Activated CD4-positive, alpha-beta T cell treated with anti-CD3 and anti-CD28 coated beads for 36 hours (primary cell): ENCODE measurements at regions of chr16 and their contacts with region 1.

Region 1: DNA sequence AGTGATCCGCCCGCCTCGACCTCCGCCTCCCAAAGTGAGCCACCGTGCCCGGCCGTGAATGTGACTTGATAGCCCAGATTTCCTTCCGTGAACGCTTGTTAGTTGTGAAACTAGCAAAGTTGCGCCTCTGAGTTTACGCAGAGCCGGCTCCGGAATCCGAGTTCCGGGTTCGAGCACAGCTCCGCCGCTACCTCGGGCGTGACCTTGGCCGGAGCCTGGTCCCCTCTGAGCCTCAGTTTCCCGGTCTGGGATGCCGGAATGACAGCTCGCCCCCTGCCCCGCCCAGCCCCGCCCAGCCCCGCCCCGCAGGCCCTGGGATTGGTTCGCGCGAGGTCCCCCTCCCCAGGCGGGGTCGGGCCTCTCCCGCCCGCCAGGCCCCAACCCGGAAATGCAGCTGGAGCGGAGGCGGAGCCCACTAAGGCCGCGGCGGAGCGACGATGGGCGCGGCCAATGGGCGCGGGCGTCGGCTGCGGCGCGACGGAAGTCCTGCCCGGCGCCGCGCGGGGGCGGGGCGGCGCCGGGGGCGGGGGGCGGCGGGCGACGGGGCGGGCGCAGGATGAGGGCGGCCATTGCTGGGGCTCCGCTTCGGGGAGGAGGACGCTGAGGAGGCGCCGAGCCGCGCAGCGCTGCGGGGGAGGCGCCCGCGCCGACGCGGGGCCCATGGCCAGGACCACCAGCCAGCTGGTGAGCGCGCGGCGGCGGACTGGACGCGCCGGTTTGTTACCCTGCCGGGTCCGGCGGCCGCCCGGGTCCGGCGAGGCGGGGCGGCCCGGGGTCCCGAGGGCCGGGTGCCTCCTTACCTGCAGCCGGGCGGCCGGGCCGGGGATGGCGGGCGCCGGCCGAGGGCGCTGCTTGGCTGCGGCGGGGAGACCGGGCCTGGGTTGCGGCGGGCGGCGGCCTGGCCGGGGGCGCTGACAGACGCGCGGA is at the start of gene PDPK1:
- DNase-seq: peak; percentile 97
- ATAC-seq: peak; percentile 93
- H3K4me3 Mint-ChIP-seq: peak within 1 kb of the TSS; percentile 83
- H3K27ac Mint-ChIP-seq: peak within 1 kb of the TSS; percentile 90
- H3K4me1 Mint-ChIP-seq: peaks cover 38% of the 10 kb centered on the region
- H3K27me3 Mint-ChIP-seq: no peaks in the 10 kb centered on the region
- total RNA-seq, gene PDPK1: 30.4 to 34.5 TPM

Region 2: GRCh38 chr16:1782352-1783091 is 755.2 kb before region 1 on chr16 and contains the starts of genes NUBP2 and SPSB3:
- CTCF ChIA-PET with region 1: no interaction called
- POLR2A ChIA-PET with region 1: no interaction called
- intact Hi-C with region 1: loop called in 1 of 2 experiments (anchors 2 kb)
- DNase-seq: peak; percentile 99
- ATAC-seq: peak; percentile 93
- H3K4me3 Mint-ChIP-seq: peak within 1 kb of the TSS; percentile 94
- H3K27ac Mint-ChIP-seq: peak within 1 kb of the TSS; percentile 85
- H3K4me1 Mint-ChIP-seq: peaks cover 26% of the 10 kb centered on the region
- H3K27me3 Mint-ChIP-seq: no peaks in the 10 kb centered on the region
- total RNA-seq, gene NUBP2: 34.4 to 42.4 TPM
- total RNA-seq, gene SPSB3: 12.5 to 13.6 TPM

Region 3: DNA sequence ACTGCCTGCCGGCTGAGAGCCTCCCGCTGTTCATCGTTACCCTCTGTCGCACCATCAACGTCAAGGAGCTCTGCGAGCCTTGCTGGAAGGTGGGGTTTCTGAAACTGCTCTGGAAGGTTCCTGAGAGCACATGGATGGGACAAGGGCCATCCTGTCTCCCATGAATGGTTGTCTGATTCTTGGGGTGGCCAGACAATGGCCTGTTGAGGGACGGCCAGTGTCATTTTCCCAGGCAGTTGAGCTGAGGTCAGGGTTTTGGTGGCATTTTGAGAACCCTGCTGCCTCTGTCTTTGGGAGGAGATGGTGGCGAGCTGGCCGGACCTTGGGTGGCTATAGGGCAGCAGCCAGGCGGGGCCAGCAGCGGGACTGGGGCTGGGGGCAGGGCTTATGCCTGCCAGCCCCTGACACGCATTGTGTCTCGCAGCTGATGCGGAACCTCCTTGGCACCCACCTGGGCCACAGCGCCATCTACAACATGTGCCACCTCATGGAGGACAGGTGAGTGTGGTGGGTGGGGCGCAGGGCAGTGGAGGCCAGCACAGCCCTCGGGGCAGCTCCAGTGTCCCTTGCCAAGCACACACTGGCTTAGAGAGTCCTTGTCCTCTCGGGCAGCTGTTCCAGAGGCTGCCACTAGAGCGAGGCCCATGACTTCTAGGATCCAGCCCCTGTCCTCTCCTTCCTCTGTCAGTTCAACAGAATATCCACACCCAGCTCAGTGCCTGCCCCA is 480.9 kb before region 1 on chr16:
- CTCF ChIA-PET with region 1: no interaction called
- POLR2A ChIA-PET with region 1: no interaction called
- intact Hi-C with region 1: no loop called
- DNase-seq: no peak
- ATAC-seq: no peak
- H3K4me3 Mint-ChIP-seq: no peak overlapping the region
- H3K27ac Mint-ChIP-seq: no peak overlapping the region
- H3K4me1 Mint-ChIP-seq: no peaks in the 10 kb centered on the region
- H3K27me3 Mint-ChIP-seq: no peaks in the 10 kb centered on the region

Region 4: GRCh38 chr16:2205104-2205966 is 332.4 kb before region 1 on chr16 and contains the start of gene MLST8:
- CTCF ChIA-PET with region 1: no interaction called
- POLR2A ChIA-PET with region 1: no interaction called
- intact Hi-C with region 1: loop called in 1 of 2 experiments (anchors 1 kb)
- DNase-seq: peak; percentile 92
- ATAC-seq: peak; percentile 84
- H3K4me3 Mint-ChIP-seq: peak within 1 kb of the TSS; percentile 83
- H3K27ac Mint-ChIP-seq: peak within 1 kb of the TSS; percentile 84
- H3K4me1 Mint-ChIP-seq: peaks cover 16% of the 10 kb centered on the region
- H3K27me3 Mint-ChIP-seq: no peaks in the 10 kb centered on the region
- total RNA-seq, gene MLST8: 61.3 to 76.1 TPM

Region 5: GRCh38 chr16:2288726-2289125 is 249.0 kb before region 1 on chr16:
- CTCF ChIA-PET with region 1: no interaction called
- POLR2A ChIA-PET with region 1: no interaction called
- intact Hi-C with region 1: no loop called
- DNase-seq: no peak
- ATAC-seq: no peak
- H3K4me3 Mint-ChIP-seq: no peak overlapping the region
- H3K27ac Mint-ChIP-seq: no peak overlapping the region
- H3K4me1 Mint-ChIP-seq: no peaks in the 10 kb centered on the region
- H3K27me3 Mint-ChIP-seq: no peaks in the 10 kb centered on the region

Region 6: GRCh38 chr16:2474877-2475412 is 62.8 kb before region 1 on chr16 and contains the start of gene TBC1D24:
- CTCF ChIA-PET with region 1: no interaction called
- POLR2A ChIA-PET with region 1: no interaction called
- intact Hi-C with region 1: loop called (anchors 1 to 5 kb)
- DNase-seq: peak; percentile 89
- ATAC-seq: peak; percentile 71
- H3K4me3 Mint-ChIP-seq: peak within 1 kb of the TSS; percentile 71
- H3K27ac Mint-ChIP-seq: peak within 1 kb of the TSS; percentile 69
- H3K4me1 Mint-ChIP-seq: peaks cover 6% of the 10 kb centered on the region
- H3K27me3 Mint-ChIP-seq: peaks cover 16% of the 10 kb centered on the region
- total RNA-seq, gene TBC1D24: 10.4 to 12.7 TPM

Region 7: GRCh38 chr16:2520092-2520783 is 17.5 kb before region 1 on chr16 and contains the start of gene AMDHD2:
- CTCF ChIA-PET with region 1: no interaction called
- POLR2A ChIA-PET with region 1: interaction called, 8 read pairs
- intact Hi-C with region 1: loop called (anchors 1 kb)
- DNase-seq: peak; percentile 95
- ATAC-seq: peak; percentile 77
- H3K4me3 Mint-ChIP-seq: peak within 1 kb of the TSS; percentile 80
- H3K27ac Mint-ChIP-seq: peak within 1 kb of the TSS; percentile 89
- H3K4me1 Mint-ChIP-seq: peaks cover 52% of the 10 kb centered on the region
- H3K27me3 Mint-ChIP-seq: no peaks in the 10 kb centered on the region
- total RNA-seq, gene AMDHD2: 20.9 to 31.6 TPM

Region 8: GRCh38 chr16:2682209-2683021 is 144.7 kb after region 1 on chr16 and contains the start of gene KCTD5:
- CTCF ChIA-PET with region 1: no interaction called
- POLR2A ChIA-PET with region 1: no interaction called
- intact Hi-C with region 1: loop called in 1 of 2 experiments (anchors 1 kb)
- DNase-seq: peak; percentile 98
- ATAC-seq: peak; percentile 92
- H3K4me3 Mint-ChIP-seq: peak within 1 kb of the TSS; percentile 100
- H3K27ac Mint-ChIP-seq: peak within 1 kb of the TSS; percentile 98
- H3K4me1 Mint-ChIP-seq: peaks cover 28% of the 10 kb centered on the region
- H3K27me3 Mint-ChIP-seq: no peaks in the 10 kb centered on the region
- total RNA-seq, gene KCTD5: 24.0 to 26.2 TPM

Region 9: DNA sequence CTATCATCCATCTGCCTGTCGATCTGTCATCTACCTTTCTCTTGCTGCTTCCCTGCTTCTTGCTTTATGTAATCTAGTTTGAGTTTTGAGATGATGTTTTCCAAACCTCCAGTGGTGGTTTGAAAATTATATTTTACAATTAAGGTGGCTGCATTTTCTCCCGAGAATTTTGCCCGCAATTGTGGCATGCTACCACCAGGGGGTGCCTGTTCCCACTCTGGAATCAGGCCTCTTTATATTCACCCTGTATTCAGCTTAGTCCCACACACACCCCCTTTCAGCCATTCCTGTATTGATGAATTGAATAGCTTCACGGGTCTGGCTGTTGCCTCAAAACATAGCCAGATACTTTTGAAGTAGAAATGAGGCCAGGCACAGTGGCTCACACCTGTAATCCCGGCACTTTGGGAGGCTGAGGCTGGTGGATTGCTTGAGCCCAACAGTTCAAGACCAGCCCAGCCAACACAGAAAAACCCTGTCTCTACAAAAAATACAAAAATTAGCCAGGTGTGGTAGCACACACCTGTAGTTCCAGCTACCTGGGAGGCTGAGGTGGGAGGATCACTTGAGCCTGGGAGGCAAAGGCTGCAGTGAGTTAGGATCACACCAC is 317.1 kb after region 1 on chr16:
- CTCF ChIA-PET with region 1: no interaction called
- POLR2A ChIA-PET with region 1: no interaction called
- intact Hi-C with region 1: no loop called
- DNase-seq: peak; percentile 53
- ATAC-seq: no peak
- H3K4me3 Mint-ChIP-seq: no peak overlapping the region
- H3K27ac Mint-ChIP-seq: no peak overlapping the region
- H3K4me1 Mint-ChIP-seq: peaks cover 4% of the 10 kb centered on the region
- H3K27me3 Mint-ChIP-seq: peaks cover 3% of the 10 kb centered on the region